ENCODE measurements at regions of chr6 and their contacts with region 1.

Region 1: DNA sequence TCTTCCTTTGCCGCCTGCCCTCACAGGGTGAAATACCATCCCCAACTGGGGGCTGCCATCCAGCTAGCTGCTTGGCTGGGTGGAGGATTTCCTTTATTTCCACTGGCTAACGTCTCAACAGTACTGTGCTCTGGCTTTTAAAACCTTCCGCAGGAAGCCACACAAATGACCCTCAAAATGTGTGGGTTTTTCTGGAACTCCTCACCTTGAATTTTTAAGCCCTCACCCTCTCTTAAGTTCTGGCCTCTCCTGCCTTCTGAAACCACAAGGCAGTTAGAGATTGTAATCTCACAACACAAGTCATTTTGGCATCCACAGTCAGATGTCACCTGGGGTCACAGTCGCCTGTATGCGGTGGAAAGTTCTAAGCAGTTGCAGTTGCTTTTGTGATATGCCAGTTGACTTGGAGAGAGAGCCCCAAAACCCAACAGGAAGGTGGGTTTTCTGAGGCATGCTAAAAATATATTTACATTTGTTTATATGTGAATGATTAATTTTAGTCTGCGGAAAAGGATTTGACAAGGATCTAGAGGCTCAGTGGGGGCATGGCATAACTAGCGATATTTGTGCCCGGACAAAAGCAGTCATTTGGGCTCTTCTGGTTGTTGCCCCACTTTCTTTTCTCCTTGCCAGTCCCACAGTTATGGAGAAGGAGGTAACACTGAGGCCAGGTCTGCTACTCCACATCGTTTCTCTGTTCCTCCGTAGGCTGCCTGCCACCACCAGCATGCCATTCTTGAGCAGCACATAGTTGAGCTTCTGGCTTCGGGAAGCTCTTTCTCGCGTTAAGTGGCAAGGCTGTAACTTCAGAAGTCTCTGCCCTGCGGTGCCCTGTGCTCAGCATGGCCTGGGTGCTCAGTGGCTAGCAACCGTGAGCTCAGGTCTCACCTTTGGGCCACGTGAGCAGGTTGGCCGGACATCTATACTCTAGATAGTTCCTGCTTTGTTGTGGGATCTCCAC is 335.3 kb downstream of the CD83 start:
- DNase-seq: peak; percentile 81
- H3K4me3 Mint-ChIP-seq: peak overlapping the region; percentile 63
- H3K27ac Mint-ChIP-seq: peak overlapping the region; percentile 90
- H3K4me1 Mint-ChIP-seq: peaks cover 91% of the 10 kb centered on the region
- H3K27me3 Mint-ChIP-seq: no peaks in the 10 kb centered on the region

Region 2: DNA sequence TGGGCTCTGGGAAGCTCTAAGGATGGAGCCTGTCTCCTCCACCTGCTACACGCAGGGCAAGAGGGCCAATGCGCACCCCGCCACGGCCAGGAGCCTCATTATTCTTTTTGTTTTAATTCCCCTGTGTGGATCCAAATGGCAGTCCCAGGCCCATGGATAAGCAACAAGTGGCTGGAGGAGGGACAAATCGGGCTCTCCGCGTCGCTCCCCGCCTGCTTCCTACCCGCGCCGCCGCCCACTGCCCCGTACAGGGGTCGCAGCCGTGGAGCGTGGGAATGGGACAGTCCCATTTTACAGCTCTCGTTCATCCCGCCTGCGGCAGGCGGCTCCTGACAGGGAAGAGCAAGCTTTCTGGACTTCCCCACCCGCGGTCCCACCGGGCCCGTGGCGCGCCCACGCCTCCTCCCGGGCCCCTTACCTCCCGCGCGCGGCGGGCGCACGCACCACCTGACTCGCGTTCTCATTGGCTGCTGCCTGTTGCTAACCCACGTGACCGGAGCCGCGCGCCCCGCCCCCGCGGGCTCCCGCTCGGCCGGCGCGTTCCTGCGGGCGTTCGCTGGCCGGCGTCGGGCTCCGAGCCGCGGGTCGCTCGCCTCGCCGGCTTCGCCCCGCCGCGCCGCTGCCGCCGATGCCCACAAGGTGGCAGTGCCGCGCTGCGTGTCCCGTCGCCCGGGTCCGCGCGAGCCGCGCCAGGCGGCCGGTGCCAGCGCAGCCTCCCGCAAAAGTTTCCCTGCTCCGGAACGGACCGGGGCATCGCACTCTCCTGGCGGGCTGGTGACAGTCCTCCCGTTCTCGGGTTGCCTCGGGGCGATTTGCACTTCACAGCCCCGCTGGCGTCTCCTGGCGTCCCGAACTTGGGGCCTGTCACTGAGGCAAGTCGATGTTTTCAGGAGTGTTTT is 241.9 kb before region 1 on chr6:
- intact Hi-C with region 1: loop called (anchors 1 kb)
- DNase-seq: peak; percentile 92
- H3K4me3 Mint-ChIP-seq: peak overlapping the region; percentile 78
- H3K27ac Mint-ChIP-seq: peak overlapping the region; percentile 83
- H3K4me1 Mint-ChIP-seq: peaks cover 40% of the 10 kb centered on the region
- H3K27me3 Mint-ChIP-seq: no peaks in the 10 kb centered on the region

Region 3: DNA sequence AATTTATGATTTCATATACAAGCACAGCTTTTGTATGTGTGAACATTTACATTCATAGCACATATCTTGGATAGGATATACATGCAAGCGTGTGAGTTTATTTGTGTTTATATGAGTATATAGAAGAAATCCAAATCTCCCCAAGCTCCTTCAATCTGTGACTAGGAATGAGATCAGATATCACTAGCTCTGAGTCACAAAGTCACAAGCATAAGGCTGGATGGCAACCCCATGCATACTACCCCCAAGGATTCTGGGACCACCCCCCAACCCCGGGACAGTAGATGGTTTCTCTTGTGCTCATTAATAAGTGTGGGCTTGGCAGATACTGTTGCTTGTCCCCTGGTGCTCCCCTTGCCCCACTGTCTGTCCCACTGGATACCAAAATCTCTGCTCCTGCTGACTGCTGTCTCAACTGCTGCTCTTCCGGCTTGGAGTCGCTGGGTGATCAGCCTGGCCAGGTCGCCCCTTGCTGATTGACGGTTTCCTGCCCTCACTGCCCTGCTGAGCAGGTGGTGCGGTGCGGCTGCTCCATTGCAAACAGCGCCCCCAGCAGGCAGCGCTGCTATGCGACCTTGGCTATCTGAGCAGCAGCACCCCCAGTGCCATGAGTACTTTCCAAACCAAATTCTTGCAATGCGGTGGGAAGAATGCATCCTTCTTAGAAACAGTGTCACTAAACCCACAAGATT is 55.9 kb before region 1 on chr6:
- intact Hi-C with region 1: loop called (anchors 2 kb)
- DNase-seq: no peak
- H3K4me3 Mint-ChIP-seq: no peak overlapping the region
- H3K27ac Mint-ChIP-seq: no peak overlapping the region
- H3K4me1 Mint-ChIP-seq: peaks cover 18% of the 10 kb centered on the region
- H3K27me3 Mint-ChIP-seq: no peaks in the 10 kb centered on the region

Region 4: DNA sequence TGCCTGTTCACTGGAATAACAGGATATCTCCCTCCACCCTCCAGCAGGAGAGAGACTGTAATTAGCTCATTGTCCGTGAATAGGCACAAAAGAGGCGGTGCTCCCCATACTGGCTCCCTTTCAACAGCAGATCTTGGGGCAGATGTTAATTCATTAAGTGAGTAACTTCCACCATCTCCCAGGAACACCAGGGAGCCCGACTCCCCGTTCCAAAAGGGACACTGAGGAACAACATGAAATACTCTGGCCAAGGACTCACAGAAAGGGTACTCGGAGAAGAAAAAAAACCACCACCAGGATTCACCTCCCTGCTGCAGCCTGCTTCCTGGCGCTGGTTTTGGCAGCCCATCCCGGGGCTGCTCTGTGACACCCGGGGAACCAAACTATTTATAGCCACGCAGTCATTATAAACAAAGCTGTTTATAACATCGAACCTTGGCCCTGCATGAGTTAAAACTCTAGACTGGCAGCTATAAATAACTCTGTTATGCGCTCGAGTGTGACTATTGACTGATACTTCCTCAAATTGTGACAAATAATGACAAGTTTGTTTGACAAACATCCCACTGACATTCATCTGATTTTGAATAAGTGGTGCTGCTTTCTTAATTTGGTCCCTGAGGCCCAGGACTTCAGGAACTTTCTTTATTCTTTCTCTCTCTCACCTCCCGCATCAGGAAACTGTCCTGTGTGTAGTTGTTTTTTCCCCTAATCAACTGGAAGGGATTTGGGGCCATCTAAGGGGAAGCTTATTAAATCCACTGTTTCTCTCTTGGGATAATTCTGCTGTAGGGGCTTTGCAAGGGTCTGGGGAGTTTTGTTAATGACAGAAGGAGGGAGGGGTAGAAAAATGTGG is 186.3 kb after region 1 on chr6:
- intact Hi-C with region 1: loop called (anchors 1 kb)
- DNase-seq: no peak
- H3K4me3 Mint-ChIP-seq: no peak overlapping the region
- H3K27ac Mint-ChIP-seq: no peak overlapping the region
- H3K4me1 Mint-ChIP-seq: peaks cover 74% of the 10 kb centered on the region
- H3K27me3 Mint-ChIP-seq: peaks cover 3% of the 10 kb centered on the region

Region 5: DNA sequence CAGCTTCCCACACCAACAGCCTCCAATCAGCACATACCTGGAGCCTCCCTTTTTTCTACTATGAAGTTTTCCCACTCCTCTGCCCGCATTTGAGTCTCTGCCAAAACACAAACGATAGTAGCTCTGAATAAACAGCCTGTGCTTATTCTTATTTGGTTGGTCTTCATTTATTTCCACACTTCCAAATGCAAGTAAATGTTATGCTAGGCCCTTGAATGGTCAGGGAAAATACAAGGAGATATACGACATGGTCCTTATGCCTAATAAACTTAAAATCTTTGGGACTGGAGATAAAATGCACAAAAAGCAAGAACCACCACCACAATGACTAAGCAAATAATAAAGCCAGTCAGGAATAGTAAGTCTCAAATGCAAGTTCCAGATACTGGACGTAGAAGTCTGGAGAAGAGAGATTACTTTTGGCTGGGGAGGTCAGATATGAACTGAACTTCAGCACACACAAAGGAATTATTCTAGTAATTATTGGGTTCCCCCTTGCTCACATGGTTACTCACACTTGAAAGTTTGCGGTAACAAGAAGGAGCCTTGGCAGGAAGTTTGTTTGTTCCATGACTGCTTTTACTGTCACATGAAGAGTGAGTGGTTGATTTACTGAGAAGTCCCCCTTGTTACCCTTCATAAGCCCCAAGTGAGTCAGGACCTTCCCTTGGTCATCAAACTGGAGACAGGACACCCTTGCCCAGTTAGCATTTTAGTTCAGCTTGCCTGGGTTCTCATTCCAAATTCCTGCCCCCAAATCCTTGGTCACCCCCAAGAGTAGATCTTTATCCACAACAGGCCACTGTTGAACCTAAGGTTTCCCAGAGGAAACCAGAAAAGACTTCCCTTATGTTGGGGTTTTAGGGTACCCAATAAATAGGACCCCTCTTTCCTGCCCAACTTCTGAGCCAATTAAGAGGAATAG is 281.8 kb after region 1 on chr6:
- intact Hi-C with region 1: loop called (anchors 1 kb)
- DNase-seq: peak; percentile 35
- H3K4me3 Mint-ChIP-seq: peak overlapping the region; percentile 62
- H3K27ac Mint-ChIP-seq: peak overlapping the region; percentile 96
- H3K4me1 Mint-ChIP-seq: peaks cover 96% of the 10 kb centered on the region
- H3K27me3 Mint-ChIP-seq: no peaks in the 10 kb centered on the region

Region 6: GRCh38 chr6:14857501-14857900 is 404.7 kb after region 1 on chr6:
- intact Hi-C with region 1: loop called (anchors 5 kb)
- DNase-seq: peak; percentile 18
- H3K4me3 Mint-ChIP-seq: peak overlapping the region; percentile 19
- H3K27ac Mint-ChIP-seq: peak overlapping the region; percentile 92
- H3K4me1 Mint-ChIP-seq: peaks cover 46% of the 10 kb centered on the region
- H3K27me3 Mint-ChIP-seq: no peaks in the 10 kb centered on the region

Region 7: DNA sequence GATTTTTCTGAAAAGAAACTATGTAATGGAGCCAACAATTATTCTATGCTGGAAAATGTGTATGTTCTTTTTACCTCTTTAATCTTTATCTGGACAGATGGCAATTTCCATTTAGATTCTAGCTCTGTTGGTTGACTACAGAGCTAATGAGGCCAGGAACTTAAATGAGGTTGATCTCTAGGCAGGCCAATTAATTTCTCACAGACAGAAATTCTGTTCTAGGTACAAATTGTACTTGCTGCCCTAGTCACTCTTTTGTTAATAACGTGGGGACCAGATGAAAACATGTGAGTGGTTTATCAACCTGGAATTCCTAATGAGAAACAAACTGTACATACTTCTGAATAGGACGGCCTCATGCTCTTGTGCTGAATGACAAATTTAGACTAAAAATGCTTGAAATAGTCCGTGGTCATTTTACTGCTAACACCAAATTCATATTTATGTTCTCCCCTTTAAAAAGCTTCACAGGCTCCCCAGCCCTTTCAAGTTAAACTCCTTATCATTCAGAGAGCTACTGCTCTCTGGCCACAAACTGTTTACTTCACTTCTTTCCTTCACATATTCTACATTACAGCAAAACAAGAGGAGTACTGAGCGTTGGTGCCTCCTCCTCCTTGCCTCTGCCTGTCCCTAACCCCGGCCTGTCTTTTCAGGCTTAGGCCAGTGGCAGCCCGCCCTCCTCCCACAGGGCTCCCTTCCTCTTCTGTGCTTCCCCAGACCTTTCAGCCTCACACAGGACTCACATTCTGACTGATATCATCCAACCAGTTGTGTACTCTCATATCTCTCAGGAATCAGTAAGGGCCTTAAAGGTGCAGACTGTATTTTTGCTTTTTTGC is 1168.6 kb after region 1 on chr6:
- intact Hi-C with region 1: loop called (anchors 10 kb)
- DNase-seq: no peak
- H3K4me3 Mint-ChIP-seq: peak overlapping the region; percentile 14
- H3K27ac Mint-ChIP-seq: peak overlapping the region; percentile 69
- H3K4me1 Mint-ChIP-seq: peaks cover 47% of the 10 kb centered on the region
- H3K27me3 Mint-ChIP-seq: no peaks in the 10 kb centered on the region

Measured in activated T-helper 2 cell treated with anti-CD3 and anti-CD28 coated beads, Interferon-gamma antibody, Interleukin-2, Interleukin-4, amounts not matched to agents 10 μg/mL and 5 μg/mL and 100 μg/mL, durations not matched to agents 14 hours and 24 hours and 36 hours (primary cell).